Endothelial cell of umbilical vein (primary cell): ENCODE measurements at regions of chr13 and their contacts with region 1.

Region 1: GRCh38 chr13:77026818-77027585 is at the start of gene FBXL3:
- DNase-seq: peak; percentile 73
- H3K4me3 ChIP-seq: peak within 1 kb of the TSS; percentile 79 to 94 (median 80)
- H3K27ac ChIP-seq: peak within 1 kb of the TSS; percentile 87
- H3K4me1 ChIP-seq: peaks cover 33% of the 10 kb centered on the region
- H3K27me3 ChIP-seq: no peaks in the 10 kb centered on the region
- CTCF ChIP-seq: no peak
- POLR2A ChIP-seq: no peak
- total RNA-seq, gene FBXL3: 35.9 and 37.8 TPM in 2 replicates

Region 2: DNA sequence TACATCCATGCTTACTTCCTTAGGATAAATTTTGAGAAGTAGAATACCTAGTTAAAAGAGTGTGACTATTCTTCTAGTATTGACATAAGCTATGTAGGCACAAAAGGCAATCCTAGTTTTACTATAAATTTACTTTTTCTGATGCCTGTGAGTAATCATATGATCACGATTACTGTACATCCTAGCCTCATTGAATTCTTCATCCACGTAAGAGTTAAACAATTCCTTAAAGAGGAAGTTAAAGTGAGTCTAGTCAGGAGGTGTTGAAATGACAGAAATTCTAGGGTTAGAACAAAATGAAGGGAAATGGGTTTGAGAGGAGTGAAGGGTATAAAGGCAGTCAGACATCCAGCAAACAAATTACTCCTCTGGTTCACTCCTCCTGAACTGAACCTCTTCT is 78.9 kb before region 1 on chr13 and contains the start of gene ACOD1:
- CTCF ChIA-PET with region 1: no interaction called
- POLR2A ChIA-PET with region 1: no interaction called
- dilution Hi-C with region 1: no loop called
- intact Hi-C with region 1: no loop called
- DNase-seq: no peak
- H3K4me3 ChIP-seq: no peak within 1 kb of the TSS
- H3K27ac ChIP-seq: no peak within 1 kb of the TSS
- H3K4me1 ChIP-seq: no peaks in the 10 kb centered on the region
- H3K27me3 ChIP-seq: peaks cover 0 to 1% of the 10 kb centered on the region in 2 experiments
- CTCF ChIP-seq: no peak
- POLR2A ChIP-seq: no peak
- total RNA-seq, gene ACOD1: not detected in 2 replicates

Region 3: GRCh38 chr13:76991796-76992547 is 35.0 kb before region 1 on chr13 and contains the start of gene CLN5:
- CTCF ChIA-PET with region 1: no interaction called
- POLR2A ChIA-PET with region 1: no interaction called
- dilution Hi-C with region 1: no loop called
- intact Hi-C with region 1: loop called (anchors 1 kb)
- DNase-seq: peak; percentile 87
- H3K4me3 ChIP-seq: peak within 1 kb of the TSS; percentile 36 to 90 (median 83)
- H3K27ac ChIP-seq: peak within 1 kb of the TSS; percentile 40
- H3K4me1 ChIP-seq: peaks cover 13% of the 10 kb centered on the region
- H3K27me3 ChIP-seq: peaks cover 4% of the 10 kb centered on the region in 2 experiments
- CTCF ChIP-seq: no peak
- POLR2A ChIP-seq: peak; percentile 81
- total RNA-seq, gene CLN5: 22.7 and 22.8 TPM in 2 replicates

Region 4: DNA sequence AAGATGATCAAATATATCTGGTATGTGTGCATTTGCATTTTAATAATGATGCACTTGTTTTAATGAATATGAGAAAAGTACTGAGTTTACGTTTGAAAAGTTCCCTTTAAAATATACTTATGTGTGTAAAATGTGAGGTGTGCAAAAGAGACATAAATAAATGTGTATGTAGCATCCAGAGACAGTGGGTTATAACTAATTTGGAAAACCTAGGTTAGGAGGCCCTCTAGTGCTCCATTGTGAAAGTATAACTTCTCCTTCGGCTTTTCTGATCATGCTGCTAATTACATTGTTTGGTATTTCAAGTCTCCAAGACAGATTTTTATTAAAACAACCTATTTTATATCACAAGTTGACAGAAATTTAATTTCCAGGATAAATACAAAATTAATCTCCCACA is 538.6 kb after region 1 on chr13:
- CTCF ChIA-PET with region 1: no interaction called
- POLR2A ChIA-PET with region 1: no interaction called
- dilution Hi-C with region 1: no loop called
- intact Hi-C with region 1: loop called (anchors 10 kb)
- DNase-seq: peak; percentile 71
- H3K4me3 ChIP-seq: no peak overlapping the region
- H3K27ac ChIP-seq: no peak overlapping the region
- H3K4me1 ChIP-seq: no peaks in the 10 kb centered on the region
- H3K27me3 ChIP-seq: peaks cover 5 to 8% of the 10 kb centered on the region in 2 experiments
- CTCF ChIP-seq: peak; percentile 28 to 33
- POLR2A ChIP-seq: no peak

Region 5: DNA sequence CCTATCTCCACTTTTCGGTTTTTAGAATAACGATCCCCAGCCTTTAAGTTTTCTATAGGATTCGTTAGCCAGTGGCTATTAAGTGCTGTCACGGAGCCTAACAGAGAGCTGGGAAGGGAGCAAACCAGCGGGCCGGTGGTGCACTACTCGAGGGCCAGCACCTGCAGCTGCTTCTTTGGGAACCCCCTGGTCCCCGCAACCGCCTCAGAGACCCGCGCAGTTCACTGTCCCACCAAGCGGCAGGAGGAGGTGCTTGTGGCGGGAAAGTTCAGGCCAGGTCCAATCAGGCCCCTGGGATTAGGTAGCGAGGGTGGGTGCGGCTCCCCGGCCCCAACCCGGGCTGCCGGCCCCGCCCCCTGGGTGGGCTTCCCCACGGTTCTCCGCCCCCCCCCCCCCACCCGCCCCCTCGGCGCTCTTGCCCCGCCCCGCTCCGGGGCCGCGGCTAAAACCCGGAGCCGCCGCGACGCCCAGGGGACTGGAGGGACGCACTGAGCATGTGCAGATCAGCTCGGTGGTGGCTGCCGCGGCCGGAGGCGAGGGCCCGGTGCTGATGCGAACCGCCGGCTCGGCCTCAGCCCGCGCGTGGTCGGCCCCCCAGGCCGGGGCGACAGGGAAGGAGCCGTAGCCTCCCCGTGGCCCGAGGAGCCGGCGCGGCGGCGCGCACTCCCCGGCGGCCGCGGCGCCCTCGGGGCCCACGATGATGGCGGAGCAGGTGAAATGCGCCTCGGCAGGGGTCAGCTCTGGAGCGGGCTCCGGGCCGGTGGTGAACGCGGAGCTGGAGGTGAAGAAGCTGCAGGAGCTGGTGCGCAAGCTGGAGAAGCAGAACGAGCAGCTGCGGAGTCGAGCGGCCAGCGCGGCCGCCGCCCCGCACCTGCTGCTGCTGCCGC is 670.5 kb after region 1 on chr13 and contains the start of gene SLAIN1:
- CTCF ChIA-PET with region 1: no interaction called
- POLR2A ChIA-PET with region 1: no interaction called
- dilution Hi-C with region 1: no loop called
- intact Hi-C with region 1: loop called (anchors 2 kb)
- DNase-seq: peak; percentile 61
- H3K4me3 ChIP-seq: peak within 1 kb of the TSS; percentile 65 to 87 (median 75)
- H3K27ac ChIP-seq: no peak within 1 kb of the TSS
- H3K4me1 ChIP-seq: no peaks in the 10 kb centered on the region
- H3K27me3 ChIP-seq: peaks cover 7 to 26% of the 10 kb centered on the region in 2 experiments
- CTCF ChIP-seq: no peak
- POLR2A ChIP-seq: no peak
- total RNA-seq, gene SLAIN1: 4.3 and 4.5 TPM in 2 replicates